HEK293 (cell line): ENCODE measurements at regions of chr9 and their contacts with region 1.

Region 1: DNA sequence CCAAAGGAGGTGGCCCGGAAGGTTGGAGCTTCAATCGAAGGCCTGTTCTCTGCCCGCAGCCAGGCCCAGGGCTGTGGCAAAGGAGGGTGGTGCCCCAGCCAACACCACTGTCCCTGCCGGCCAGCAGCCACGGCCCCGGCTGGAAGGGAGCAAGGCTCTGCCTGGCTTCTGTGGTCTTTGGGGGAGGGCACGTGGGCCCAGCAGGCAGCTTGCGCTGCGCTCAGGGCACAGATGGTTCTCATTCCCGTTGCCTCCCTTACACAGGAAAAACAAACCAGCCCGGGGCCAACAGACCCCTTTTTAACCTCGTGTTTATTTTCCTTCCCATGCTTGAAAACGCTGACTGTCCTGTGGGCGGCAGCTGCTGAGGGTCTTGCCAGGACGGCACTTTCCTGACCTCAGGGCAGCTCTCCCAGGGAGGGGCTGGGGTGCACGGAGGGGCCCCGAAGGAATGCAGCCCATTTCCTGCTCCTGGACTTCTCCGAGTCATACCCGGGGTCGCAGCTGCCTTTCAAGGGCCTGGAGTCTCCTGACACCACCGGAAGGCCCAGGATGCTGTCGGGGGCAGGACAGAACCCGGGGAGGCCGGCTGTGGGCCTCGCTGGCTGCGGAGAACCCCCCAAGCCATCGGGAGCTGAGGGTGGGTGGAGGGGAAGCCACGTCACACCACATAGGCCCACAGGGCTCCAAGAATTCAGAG is 1.1 kb upstream of the GPSM1 start:
- H3K4me3 ChIP-seq: no peak overlapping the region
- H3K27ac ChIP-seq: no peak overlapping the region; the same call in 1 of the 2 replicates
- H3K4me1 ChIP-seq: peaks cover 8% of the 10 kb centered on the region
- CTCF ChIP-seq: no peak

Region 2: DNA sequence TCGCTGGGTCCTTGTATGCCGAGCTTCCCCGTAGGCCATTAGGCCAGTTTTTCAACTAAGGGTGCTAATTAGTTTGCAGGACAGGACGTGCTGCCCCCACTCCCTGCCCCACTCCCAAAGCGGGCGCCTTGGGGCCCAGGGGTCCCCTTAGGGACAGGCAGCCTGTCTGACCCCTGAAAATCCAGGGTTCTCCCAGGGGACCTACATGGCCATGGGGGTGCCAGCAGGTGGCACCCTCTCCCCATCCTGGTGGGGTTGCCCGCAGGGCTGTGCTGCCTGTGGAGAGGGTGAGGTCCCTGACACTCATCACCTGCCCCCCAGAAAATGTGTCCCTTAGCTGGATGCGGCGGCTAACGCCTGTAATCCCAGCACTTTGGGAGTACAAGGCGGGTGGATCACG is 13.8 kb before region 1 on chr9:
- CTCF ChIA-PET with region 1: interaction called, 30 read pairs
- POLR2A ChIA-PET with region 1: no interaction called
- H3K4me3 ChIP-seq: no peak overlapping the region
- H3K27ac ChIP-seq: no peak overlapping the region
- H3K4me1 ChIP-seq: no peaks in the 10 kb centered on the region
- CTCF ChIP-seq: peak; percentile 62

Region 3: GRCh38 chr9:136339173-136339957 is 13.2 kb after region 1 on chr9:
- CTCF ChIA-PET with region 1: interaction called, 23 read pairs
- POLR2A ChIA-PET with region 1: interaction called, 3 read pairs
- H3K4me3 ChIP-seq: no peak overlapping the region
- H3K27ac ChIP-seq: no peak overlapping the region
- H3K4me1 ChIP-seq: no peaks in the 10 kb centered on the region
- CTCF ChIP-seq: peak; percentile 76